MCF 10A (cell line): ENCODE measurements at regions of chr10 and their contacts with region 1.

Region 1: DNA sequence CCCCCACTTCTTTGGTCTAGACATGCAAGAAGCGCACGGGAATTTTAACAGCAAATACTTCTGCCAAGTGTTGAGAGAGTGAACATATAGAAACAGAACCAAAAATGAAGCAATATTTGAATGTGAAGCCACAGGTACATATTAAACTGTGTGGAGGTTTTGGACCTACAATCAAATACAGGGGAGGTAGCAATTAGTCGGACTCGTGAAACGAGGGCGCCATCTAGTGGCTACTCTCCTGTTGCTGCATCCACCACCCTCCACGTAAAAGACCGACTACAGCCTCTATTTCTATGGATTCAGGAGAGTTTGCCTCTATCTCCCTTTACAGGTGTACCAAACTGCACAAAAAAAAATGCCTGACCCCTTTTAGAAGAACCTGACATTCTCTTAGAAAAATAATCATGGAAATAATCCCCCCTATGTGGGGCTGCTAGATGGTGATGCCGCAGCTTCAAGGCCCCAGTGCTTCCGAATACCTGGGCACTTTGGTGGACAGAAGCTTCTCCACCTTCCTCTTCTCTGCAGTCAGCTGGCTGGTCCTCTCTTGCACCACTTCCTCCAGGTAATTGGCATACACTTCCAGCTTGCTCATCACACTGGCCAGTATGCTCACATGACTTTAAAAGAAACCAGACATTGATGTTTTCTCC is 31.7 kb downstream of the TECTB start:
- DNase-seq: peak; percentile 83
- H3K4me3 Mint-ChIP-seq: no peak overlapping the region
- H3K27ac Mint-ChIP-seq: no peak overlapping the region
- H3K4me1 Mint-ChIP-seq: no peaks in the 10 kb centered on the region
- H3K27me3 Mint-ChIP-seq: no peaks in the 10 kb centered on the region
- CTCF ChIP-seq: peak; percentile 87

Region 2: GRCh38 chr10:111360260-111360925 is 954.6 kb before region 1 on chr10:
- CTCF ChIA-PET with region 1: no interaction called
- POLR2A ChIA-PET with region 1: no interaction called
- intact Hi-C with region 1: loop called (anchors 10 kb)
- DNase-seq: peak; percentile 63
- H3K4me3 Mint-ChIP-seq: no peak overlapping the region
- H3K27ac Mint-ChIP-seq: no peak overlapping the region
- H3K4me1 Mint-ChIP-seq: no peaks in the 10 kb centered on the region
- H3K27me3 Mint-ChIP-seq: peaks cover 61% of the 10 kb centered on the region
- CTCF ChIP-seq: peak; percentile 66

Region 3: DNA sequence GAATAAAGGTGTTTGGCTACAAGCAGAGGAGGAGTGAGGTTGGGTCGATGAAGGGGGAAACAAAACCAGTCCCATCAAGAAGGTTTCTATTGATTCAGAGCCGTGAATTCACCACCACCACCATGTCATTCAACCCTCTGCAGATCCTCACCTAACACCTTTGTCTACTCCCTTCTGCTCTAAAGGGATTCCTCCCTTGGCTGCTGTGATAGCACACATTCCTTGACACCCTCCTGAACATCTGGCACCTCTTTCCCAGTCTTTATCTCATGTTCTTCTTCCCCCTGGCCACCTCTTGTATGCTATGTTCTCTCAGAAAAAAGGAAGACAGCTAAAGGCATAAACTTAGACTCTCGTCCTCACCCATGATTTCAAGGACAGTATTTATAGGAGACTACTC is 449.4 kb before region 1 on chr10:
- CTCF ChIA-PET with region 1: no interaction called
- POLR2A ChIA-PET with region 1: no interaction called
- intact Hi-C with region 1: loop called (anchors 10 kb)
- DNase-seq: no peak
- H3K4me3 Mint-ChIP-seq: no peak overlapping the region
- H3K27ac Mint-ChIP-seq: no peak overlapping the region
- H3K4me1 Mint-ChIP-seq: no peaks in the 10 kb centered on the region
- H3K27me3 Mint-ChIP-seq: no peaks in the 10 kb centered on the region
- CTCF ChIP-seq: no peak

Region 4: DNA sequence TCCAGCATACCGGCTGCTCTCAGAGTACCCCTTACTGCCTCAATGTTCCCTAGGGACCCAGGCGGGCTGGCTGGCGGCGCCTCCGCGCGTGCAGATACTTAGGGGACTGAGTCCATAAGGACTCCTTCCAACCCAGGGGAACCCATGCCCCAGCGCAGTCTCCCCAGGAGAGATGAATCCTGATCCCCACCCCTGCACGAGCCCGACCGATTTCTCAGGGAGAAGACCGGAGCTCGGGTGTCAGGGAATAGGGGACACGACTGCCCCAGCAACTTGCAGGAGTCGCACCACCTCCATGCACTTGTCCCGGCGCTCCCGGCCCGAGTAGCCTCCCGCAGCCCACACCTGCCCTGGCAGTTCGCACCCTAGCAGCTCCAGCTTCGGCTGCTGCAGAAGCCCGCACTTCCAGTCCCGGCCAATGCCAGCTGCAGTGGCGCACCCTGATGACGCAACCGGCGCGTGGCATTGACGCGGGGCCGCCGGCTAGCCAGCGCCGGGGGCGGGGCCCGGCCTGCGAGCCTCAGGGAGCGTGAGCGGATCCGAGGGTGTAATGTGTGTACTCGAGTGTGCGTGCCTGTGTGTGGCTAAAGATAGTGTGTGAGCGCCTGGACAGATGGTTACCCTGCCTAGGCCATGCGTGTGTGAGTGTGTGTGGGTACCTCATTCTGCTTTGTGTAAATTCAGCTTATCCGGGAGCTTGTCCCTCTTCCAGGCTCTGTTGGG is 131.5 kb before region 1 on chr10 and contains the start of gene GPAM:
- CTCF ChIA-PET with region 1: interaction called, 65 read pairs
- POLR2A ChIA-PET with region 1: interaction called, 8 read pairs
- intact Hi-C with region 1: no loop called
- DNase-seq: peak; percentile 87
- H3K4me3 Mint-ChIP-seq: peak within 1 kb of the TSS; percentile 98
- H3K27ac Mint-ChIP-seq: peak within 1 kb of the TSS; percentile 94
- H3K4me1 Mint-ChIP-seq: peaks cover 19% of the 10 kb centered on the region
- H3K27me3 Mint-ChIP-seq: no peaks in the 10 kb centered on the region
- CTCF ChIP-seq: no peak
- total RNA-seq, gene GPAM: 19.8 and 20.4 TPM in 2 replicates

Region 5: GRCh38 chr10:112434988-112435619 is 120.2 kb after region 1 on chr10:
- CTCF ChIA-PET with region 1: interaction called, 68 read pairs
- POLR2A ChIA-PET with region 1: interaction called, 4 read pairs
- intact Hi-C with region 1: loop called (anchors 2 kb)
- DNase-seq: peak; percentile 45
- H3K4me3 Mint-ChIP-seq: no peak overlapping the region
- H3K27ac Mint-ChIP-seq: no peak overlapping the region
- H3K4me1 Mint-ChIP-seq: no peaks in the 10 kb centered on the region
- H3K27me3 Mint-ChIP-seq: no peaks in the 10 kb centered on the region
- CTCF ChIP-seq: peak; percentile 47